B cell (primary cell): ENCODE measurements at regions of chr9 and their contacts with region 1.

Region 1: GRCh38 chr9:92963831-92964626 is 16.7 kb downstream of the FGD3 start:
- DNase-seq: peak; percentile 88
- ATAC-seq: peak; percentile 80
- H3K4me3 ChIP-seq: peak overlapping the region; percentile 75 to 92 (median 86)
- H3K4me3 Mint-ChIP-seq: peak overlapping the region; percentile 96
- H3K27ac ChIP-seq: peak overlapping the region; percentile 78 to 83
- H3K27ac Mint-ChIP-seq: peak overlapping the region; percentile 98
- H3K4me1 ChIP-seq: peaks cover 58 to 74% of the 10 kb centered on the region in 2 donors
- H3K4me1 Mint-ChIP-seq: peaks cover 75% of the 10 kb centered on the region
- H3K27me3 ChIP-seq: no peaks in the 10 kb centered on the region
- H3K27me3 Mint-ChIP-seq: no peaks in the 10 kb centered on the region
- CTCF ChIP-seq: no peak

Region 2: GRCh38 chr9:92877531-92878430 is 86.2 kb before region 1 on chr9 and contains the start of gene ZNF484:
- CTCF ChIA-PET with region 1: no interaction called
- POLR2A ChIA-PET with region 1: no interaction called
- intact Hi-C with region 1: loop called (anchors 1 kb)
- DNase-seq: peak; percentile 99
- ATAC-seq: peak; percentile 96
- H3K4me3 ChIP-seq: peak within 1 kb of the TSS; percentile 68 to 94 (median 78)
- H3K4me3 Mint-ChIP-seq: peak within 1 kb of the TSS; percentile 100
- H3K27ac ChIP-seq: peak within 1 kb of the TSS; percentile 85 to 93
- H3K27ac Mint-ChIP-seq: peak within 1 kb of the TSS; percentile 99
- H3K4me1 ChIP-seq: peaks cover 3 to 9% of the 10 kb centered on the region in 2 donors
- H3K4me1 Mint-ChIP-seq: peaks cover 31% of the 10 kb centered on the region
- H3K27me3 ChIP-seq: no peaks in the 10 kb centered on the region
- H3K27me3 Mint-ChIP-seq: no peaks in the 10 kb centered on the region
- CTCF ChIP-seq: no peak
- total RNA-seq, gene ZNF484: 22.7 and 22.9 TPM in 2 replicates

Region 3: DNA sequence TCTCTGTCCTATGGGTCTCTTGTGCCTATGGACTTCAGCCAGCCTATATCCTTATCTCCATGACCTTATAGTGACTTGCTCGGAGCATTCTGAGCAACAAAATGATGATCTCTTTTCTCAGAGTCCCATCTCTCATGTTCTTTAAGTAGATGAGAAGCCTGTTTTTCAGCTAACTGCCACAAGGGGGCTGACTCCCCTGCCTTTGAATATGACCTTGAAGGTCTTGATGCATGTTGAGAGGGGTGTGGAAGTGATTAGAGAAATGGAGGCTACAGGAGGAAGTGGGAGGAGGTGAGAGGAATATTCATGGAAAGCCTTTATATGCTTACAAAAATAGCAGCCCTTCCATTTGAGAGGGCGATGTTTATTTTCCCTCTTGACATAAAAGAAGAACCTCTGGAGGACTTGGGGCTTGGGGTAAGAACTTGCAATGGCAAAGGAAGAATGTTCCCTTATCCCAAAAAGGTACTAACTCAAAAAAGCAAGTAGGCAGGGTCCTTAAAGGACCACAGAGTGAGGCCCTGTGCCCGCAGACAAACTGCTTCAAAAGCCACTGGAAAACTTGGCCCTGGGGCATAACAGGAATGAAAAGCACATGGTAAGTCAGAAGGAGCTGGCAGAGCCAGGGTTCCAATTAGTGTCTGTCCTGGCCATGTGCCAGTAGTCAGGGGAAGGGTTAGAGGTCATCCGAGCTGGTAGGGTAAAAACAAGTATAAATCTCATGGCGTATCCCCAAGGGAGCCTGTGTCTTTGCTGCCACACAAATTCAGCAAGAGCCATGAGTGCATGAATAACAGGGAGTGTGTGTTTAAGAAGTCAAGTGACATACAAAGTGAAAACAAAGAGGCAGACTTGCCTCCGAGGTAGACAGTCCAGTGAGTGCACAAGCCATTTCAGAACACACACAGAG is 22.4 kb after region 1 on chr9:
- CTCF ChIA-PET with region 1: no interaction called
- POLR2A ChIA-PET with region 1: interaction called, 4 read pairs
- intact Hi-C with region 1: loop called (anchors 1 kb)
- DNase-seq: peak; percentile 60
- ATAC-seq: no peak
- H3K4me3 ChIP-seq: no peak overlapping the region
- H3K4me3 Mint-ChIP-seq: no peak overlapping the region
- H3K27ac ChIP-seq: peak overlapping the region in 1 of 2 donors; percentile 59
- H3K27ac Mint-ChIP-seq: peak overlapping the region; percentile 12
- H3K4me1 ChIP-seq: peaks cover 3 to 17% of the 10 kb centered on the region in 2 donors
- H3K4me1 Mint-ChIP-seq: peaks cover 56% of the 10 kb centered on the region
- H3K27me3 ChIP-seq: no peaks in the 10 kb centered on the region
- H3K27me3 Mint-ChIP-seq: no peaks in the 10 kb centered on the region
- CTCF ChIP-seq: peak; percentile 81

Region 4: DNA sequence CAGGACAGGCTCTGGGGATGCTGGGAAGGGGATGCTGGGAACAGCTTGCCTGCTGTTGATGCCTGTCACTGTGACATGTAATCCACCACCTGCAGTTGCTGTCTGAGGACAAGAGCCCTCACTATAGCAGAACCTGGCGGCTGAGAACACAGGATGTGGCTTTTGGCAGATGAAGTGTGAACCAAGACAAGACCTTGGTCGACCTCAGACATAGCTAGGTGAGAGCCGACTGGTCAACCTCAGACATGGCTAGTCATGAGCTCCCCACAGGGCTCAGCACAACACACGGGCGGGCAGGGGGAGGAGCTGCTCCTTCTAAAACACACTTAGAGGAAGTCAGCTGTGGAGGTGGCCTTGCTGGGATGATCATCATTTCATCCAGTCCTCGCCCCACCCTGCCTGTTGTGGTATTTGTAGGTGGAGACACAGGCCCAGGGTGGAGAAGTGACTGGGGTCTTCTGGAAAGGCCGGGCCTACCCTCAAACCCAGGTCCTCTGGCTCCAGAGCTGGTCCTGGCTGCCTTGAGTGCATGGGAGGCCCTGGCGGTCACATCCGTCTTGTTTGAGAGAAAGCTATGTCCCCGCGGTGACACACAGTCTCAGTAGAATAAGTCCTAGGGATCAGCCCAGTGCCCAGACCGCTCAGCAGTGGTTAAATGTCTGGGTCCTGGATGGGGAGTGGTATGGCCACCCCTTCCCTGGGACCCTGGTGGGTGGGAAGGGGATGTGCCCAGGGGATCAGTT is 100.5 kb after region 1 on chr9:
- CTCF ChIA-PET with region 1: no interaction called
- POLR2A ChIA-PET with region 1: interaction called, 5 read pairs
- intact Hi-C with region 1: loop called (anchors 2 kb)
- DNase-seq: peak; percentile 89
- ATAC-seq: peak; percentile 78
- H3K4me3 ChIP-seq: peak overlapping the region in 4 of 5 experiments; percentile 5 to 36 (median 18)
- H3K4me3 Mint-ChIP-seq: peak overlapping the region; percentile 92
- H3K27ac ChIP-seq: peak overlapping the region; percentile 74 to 78
- H3K27ac Mint-ChIP-seq: peak overlapping the region; percentile 99
- H3K4me1 ChIP-seq: peaks cover 63 to 65% of the 10 kb centered on the region in 2 donors
- H3K4me1 Mint-ChIP-seq: peaks cover 81% of the 10 kb centered on the region
- H3K27me3 ChIP-seq: no peaks in the 10 kb centered on the region
- H3K27me3 Mint-ChIP-seq: no peaks in the 10 kb centered on the region
- CTCF ChIP-seq: no peak

Region 5: DNA sequence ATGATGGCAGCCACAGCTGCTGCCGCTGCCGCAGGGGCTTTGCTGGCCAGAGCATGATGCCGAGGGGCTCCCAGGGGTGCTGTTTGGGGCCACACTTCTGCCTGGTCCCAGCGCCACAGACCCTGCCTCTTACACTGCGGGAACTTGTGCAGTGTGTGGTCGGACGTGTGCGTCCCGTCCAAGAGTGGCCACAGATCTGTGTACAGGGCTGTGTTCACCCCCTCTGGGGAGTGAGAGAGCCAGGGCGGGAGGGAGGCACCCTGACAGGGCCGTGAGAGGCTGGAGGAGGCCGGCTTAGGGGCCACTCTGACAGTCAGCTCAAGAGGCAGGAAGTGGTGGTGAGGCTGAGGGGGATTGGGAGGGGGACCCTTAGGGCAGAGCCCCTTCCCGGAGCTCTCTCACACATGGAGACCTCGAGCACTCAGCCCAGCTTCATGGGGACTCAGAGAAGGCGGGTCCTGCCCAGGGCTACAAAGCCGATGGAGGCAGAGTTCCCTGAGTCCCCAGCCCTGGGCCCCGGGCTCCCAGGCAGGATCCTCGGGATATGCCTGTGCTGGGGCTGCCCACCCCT is 118.9 kb after region 1 on chr9:
- CTCF ChIA-PET with region 1: no interaction called
- POLR2A ChIA-PET with region 1: no interaction called
- intact Hi-C with region 1: no loop called
- DNase-seq: no peak
- ATAC-seq: no peak
- H3K4me3 ChIP-seq: no peak overlapping the region
- H3K4me3 Mint-ChIP-seq: no peak overlapping the region
- H3K27ac ChIP-seq: no peak overlapping the region
- H3K27ac Mint-ChIP-seq: no peak overlapping the region
- H3K4me1 ChIP-seq: no peaks in the 10 kb centered on the region
- H3K4me1 Mint-ChIP-seq: no peaks in the 10 kb centered on the region
- H3K27me3 ChIP-seq: no peaks in the 10 kb centered on the region
- H3K27me3 Mint-ChIP-seq: no peaks in the 10 kb centered on the region
- CTCF ChIP-seq: no peak

Region 6: DNA sequence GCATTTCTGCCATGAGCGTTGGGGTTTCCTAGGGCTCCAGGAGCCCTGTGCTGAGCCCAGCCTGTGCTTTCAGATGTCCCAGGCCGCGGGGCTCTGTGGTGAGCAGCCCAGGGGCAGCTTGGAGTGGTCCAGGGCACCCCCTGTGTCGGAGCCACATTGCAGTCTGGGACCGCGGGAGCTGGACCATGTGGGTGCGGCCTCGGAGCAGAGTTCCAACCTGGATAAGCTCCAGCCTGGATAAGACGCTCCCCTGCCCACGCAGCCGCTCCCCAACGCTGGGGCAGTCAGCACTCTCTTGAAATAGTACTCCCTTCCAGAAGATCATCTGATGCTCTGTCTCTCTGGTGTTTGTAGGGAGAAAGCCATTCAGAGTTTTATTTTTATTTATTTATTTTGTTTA is 331.0 kb after region 1 on chr9:
- CTCF ChIA-PET with region 1: no interaction called
- POLR2A ChIA-PET with region 1: interaction called, 12 read pairs
- intact Hi-C with region 1: no loop called
- DNase-seq: no peak
- ATAC-seq: no peak
- H3K4me3 ChIP-seq: no peak overlapping the region
- H3K4me3 Mint-ChIP-seq: no peak overlapping the region
- H3K27ac ChIP-seq: no peak overlapping the region
- H3K27ac Mint-ChIP-seq: no peak overlapping the region
- H3K4me1 ChIP-seq: peaks cover 13 to 14% of the 10 kb centered on the region in 2 donors
- H3K4me1 Mint-ChIP-seq: peaks cover 16% of the 10 kb centered on the region
- H3K27me3 ChIP-seq: no peaks in the 10 kb centered on the region
- H3K27me3 Mint-ChIP-seq: peaks cover 20% of the 10 kb centered on the region
- CTCF ChIP-seq: no peak